Activated CD4-positive, alpha-beta memory T cell treated with anti-CD3 and anti-CD28 coated beads for 36 hours (primary cell): ENCODE measurements at regions of chr3 and their contacts with region 1.

Region 1: DNA sequence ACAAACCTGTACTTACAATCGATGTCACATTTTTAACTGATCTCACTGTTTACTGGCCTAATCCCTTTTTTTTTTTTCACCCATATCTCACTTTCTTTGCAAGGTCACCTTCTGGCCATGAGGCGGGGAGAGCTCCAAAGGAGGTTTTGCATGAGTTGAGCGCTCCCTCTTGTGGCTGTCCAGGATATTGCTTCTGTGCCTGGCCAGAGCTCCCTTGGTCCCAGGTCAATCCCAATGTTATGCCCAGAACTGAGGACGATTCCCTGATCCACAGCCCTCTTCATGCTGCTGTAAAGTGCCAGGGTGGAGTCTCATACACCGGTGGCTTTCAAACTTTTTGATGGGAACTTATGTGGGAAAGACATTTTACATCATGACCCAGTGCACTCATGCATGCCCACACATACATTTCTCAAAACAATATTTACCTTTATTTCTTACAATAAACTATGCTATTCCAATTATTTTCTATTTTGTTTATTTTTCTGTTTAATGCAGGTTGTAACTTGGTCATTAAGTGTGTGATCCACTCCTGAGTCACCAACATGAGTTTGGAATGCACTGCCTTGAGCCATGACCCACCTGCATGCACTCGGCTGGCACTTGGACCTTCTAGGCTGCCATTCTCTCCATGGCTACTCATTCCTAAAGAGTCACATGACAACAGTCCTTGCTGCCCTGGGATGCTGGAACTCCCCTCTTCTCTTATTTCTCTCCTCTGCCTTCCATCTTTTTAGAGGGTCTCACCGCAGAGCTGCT is 9.6 kb upstream of the SST start:
- DNase-seq: peak; percentile 76
- H3K4me3 Mint-ChIP-seq: no peak overlapping the region
- H3K27ac Mint-ChIP-seq: no peak overlapping the region
- H3K4me1 Mint-ChIP-seq: peaks cover 3% of the 10 kb centered on the region
- H3K27me3 Mint-ChIP-seq: peaks cover 31% of the 10 kb centered on the region

Region 2: GRCh38 chr3:187327845-187328244 is 352.0 kb before region 1 on chr3:
- CTCF ChIA-PET with region 1: interaction called, 515 read pairs
- POLR2A ChIA-PET with region 1: no interaction called
- intact Hi-C with region 1: no loop called
- DNase-seq: no peak
- H3K4me3 Mint-ChIP-seq: no peak overlapping the region
- H3K27ac Mint-ChIP-seq: no peak overlapping the region
- H3K4me1 Mint-ChIP-seq: no peaks in the 10 kb centered on the region
- H3K27me3 Mint-ChIP-seq: peaks cover 7% of the 10 kb centered on the region

Region 3: DNA sequence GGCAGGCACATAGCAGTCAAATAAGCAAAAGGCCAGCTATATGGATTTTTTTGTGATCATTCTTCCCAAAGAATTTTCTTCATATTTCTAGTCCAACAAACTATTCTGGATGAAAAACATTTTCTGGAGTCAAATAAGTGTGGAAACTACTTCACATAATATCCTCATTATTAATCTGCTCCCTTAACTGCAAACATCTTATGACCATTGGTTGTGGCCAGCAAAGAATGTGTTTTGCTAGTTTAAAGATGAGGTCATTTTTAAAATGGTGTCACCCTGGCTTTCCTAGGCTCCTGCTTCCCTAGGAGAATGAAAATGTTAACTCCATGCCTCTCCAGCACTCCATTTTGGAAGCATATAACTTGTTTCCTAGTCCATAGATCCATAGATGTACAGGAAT is 128.4 kb before region 1 on chr3:
- CTCF ChIA-PET with region 1: no interaction called
- POLR2A ChIA-PET with region 1: no interaction called
- intact Hi-C with region 1: no loop called
- DNase-seq: no peak
- H3K4me3 Mint-ChIP-seq: no peak overlapping the region
- H3K27ac Mint-ChIP-seq: no peak overlapping the region
- H3K4me1 Mint-ChIP-seq: no peaks in the 10 kb centered on the region
- H3K27me3 Mint-ChIP-seq: peaks cover 13% of the 10 kb centered on the region

Region 4: DNA sequence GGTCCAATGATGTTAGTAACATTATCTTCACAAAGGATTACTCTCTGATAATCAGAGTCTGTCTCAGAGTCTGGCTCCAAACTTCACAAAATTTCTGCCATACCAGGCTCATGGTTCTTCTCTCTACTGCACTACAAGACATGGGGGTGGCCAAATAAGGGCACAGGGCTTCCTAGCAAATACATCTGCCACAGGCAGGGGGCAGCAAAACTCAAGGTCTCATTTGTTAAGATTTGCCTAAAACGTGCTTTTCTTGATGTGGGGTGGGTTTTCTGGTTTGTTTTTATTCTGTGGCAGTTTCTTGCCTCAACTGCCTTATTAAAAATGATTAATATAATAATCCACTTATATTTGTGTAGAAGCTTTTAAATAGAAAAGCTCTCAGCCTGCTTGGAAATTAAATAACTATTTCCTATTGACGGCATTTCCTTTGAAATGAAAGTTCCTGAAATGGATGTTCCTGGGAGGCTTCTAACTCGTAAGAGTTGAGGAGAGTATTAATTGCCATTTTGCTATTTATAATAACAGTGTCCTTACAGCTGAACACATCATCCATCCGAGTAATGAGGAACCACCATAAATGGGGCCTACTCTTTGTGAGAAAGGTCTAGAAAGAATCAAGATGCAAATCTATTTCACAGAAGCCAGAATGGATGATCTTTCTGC is 63.4 kb before region 1 on chr3:
- CTCF ChIA-PET with region 1: interaction called, 187 read pairs
- POLR2A ChIA-PET with region 1: no interaction called
- intact Hi-C with region 1: loop called (anchors 1 kb)
- DNase-seq: peak; percentile 67
- H3K4me3 Mint-ChIP-seq: no peak overlapping the region
- H3K27ac Mint-ChIP-seq: no peak overlapping the region
- H3K4me1 Mint-ChIP-seq: no peaks in the 10 kb centered on the region
- H3K27me3 Mint-ChIP-seq: peaks cover 9% of the 10 kb centered on the region

Region 5: GRCh38 chr3:187694801-187695200 is 15.0 kb after region 1 on chr3:
- CTCF ChIA-PET with region 1: interaction called, 11 read pairs
- POLR2A ChIA-PET with region 1: no interaction called
- intact Hi-C with region 1: no loop called
- DNase-seq: no peak
- H3K4me3 Mint-ChIP-seq: no peak overlapping the region
- H3K27ac Mint-ChIP-seq: no peak overlapping the region
- H3K4me1 Mint-ChIP-seq: no peaks in the 10 kb centered on the region
- H3K27me3 Mint-ChIP-seq: peaks cover 31% of the 10 kb centered on the region

Region 6: DNA sequence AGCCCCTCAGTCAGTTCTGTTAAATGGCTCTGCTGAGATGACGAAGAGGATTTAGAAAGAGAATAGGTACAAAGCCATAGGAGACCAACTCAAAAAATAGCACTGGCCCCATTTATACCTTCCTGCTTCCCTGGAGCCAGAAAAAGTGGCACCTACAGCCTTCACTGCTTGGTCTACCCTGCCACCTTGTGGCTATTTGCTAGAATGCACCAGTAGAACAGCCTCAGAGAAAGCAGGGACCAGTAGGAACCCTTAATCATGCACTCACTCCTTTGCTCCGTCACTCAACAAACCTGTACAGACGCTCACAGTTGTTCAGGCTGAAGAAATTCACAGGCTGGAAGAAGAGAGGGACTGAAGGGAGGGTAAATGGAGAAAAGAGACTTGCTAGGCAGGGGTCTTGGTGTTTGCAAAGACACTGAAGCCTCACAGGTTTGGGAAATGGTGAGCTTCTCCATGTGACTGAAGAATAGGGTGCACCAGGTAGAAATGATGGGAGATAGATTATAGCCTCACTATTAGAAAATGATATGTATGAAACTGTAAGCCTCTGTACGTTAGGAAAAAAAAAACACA is 34.7 kb after region 1 on chr3:
- CTCF ChIA-PET with region 1: interaction called, 78 read pairs
- POLR2A ChIA-PET with region 1: no interaction called
- intact Hi-C with region 1: loop called (anchors 1 kb)
- DNase-seq: peak; percentile 82
- H3K4me3 Mint-ChIP-seq: no peak overlapping the region
- H3K27ac Mint-ChIP-seq: no peak overlapping the region
- H3K4me1 Mint-ChIP-seq: peaks cover 12% of the 10 kb centered on the region
- H3K27me3 Mint-ChIP-seq: no peaks in the 10 kb centered on the region

Region 7: DNA sequence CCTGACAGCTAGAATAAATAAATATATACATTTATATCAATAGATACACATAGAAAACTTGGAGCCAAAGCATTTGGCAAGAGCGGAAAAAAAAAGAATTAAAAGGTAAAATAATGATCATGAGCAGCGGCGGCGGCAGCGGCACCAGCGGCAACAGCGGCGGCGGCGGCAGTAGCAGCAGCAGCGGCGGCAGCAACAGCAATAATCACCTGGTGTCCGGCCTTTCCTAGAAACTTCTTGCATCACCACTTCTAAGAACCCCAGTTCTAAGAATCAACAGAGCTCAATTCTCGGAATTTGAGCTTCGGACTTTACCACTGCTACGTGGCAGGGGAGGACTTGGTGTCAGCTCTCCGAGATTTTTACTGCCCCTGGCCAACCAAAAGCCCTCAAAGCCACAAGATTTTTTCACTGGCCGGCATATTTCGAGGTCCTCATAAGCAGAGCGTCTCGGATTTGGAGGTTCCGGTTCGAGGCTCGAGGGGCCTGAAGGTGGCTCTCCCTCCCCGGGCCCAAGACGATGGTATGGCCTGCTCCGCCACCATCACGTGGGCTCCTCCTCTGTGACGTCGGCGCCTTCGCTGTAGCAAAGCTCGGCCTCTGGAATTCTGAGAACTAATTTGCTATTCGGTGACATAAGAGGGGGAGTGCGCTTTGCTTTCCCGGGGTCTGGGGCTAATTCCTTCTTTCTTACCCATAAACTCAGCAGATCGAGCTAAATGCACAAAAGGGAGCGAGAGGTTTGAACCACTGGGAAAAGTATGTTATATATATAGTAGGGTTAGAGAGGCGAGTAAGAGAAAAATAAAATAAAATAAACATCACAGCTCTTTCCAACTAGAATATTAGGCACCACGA is 65.6 kb after region 1 on chr3 and contains the start of gene BCL6:
- CTCF ChIA-PET with region 1: no interaction called
- POLR2A ChIA-PET with region 1: no interaction called
- intact Hi-C with region 1: no loop called
- DNase-seq: peak; percentile 91
- H3K4me3 Mint-ChIP-seq: peak within 1 kb of the TSS; percentile 90
- H3K27ac Mint-ChIP-seq: peak within 1 kb of the TSS; percentile 99
- H3K4me1 Mint-ChIP-seq: peaks cover 47% of the 10 kb centered on the region
- H3K27me3 Mint-ChIP-seq: no peaks in the 10 kb centered on the region
- total RNA-seq, gene BCL6: 41.4 to 51.3 TPM